ENCODE measurements at regions of chr1 and their contacts with region 1.

Region 1: DNA sequence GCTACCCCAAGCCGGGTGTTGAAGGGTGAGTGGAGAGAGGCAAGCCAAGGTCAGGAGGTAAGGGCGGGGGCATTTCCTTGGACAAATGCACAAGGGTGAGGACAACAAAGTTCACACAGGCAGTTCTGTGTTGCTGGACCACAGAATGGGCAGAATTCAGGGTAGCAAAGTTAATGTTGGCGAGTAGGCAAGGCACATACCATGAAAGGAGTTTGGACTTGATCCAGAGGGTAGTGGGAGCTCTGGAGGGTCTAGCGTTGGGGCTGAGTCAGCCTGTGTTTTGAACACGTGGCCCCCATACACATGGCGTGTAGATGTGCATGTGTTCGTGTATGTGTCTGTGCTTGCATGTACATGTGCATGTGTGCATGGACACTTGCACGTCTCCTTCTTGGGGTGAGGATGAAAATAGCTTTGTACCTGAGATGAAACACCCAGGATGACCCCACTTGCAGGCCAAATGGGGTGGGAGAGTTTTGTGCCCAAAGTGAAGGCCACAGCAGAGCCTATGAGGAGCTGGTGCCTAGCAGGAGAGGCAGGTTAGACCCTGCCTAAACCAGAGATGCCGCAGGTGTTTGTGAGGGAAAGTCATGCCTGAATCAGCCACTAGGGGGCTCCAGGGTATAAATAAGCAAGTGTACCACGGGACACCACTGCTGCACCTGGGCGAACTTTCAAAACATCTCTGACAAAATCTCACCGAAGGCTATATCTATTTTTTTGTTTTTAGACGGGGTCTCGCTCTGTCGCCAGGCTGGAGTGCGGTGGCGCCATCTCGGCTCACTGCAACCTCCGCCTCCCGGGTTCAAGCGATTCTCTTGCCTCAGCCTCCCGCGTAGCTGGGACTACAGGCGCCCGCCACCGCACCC is 21.8 kb downstream of the SLC27A3 start:
- DNase-seq: peak; percentile 90 to 93
- H3K4me3 ChIP-seq: no peak overlapping the region
- H3K27ac ChIP-seq: no peak overlapping the region
- H3K4me1 ChIP-seq: peaks cover 0 to 8% (median 4%) of the 10 kb centered on the region in 4 donors
- H3K27me3 ChIP-seq: peaks cover 0 to 14% (median 0%) of the 10 kb centered on the region in 3 donors
- CTCF ChIP-seq: peak in 5 of 7 experiments; percentile 79 to 94 (median 91)
- EP300 ChIP-seq: no peak
- POLR2A ChIP-seq: no peak

Region 2: GRCh38 chr1:153946622-153947241 is 149.7 kb after region 1 on chr1 and contains the start of gene DENND4B:
- intact Hi-C with region 1: loop called (anchors 10 kb)
- DNase-seq: peak; percentile 84 to 95
- H3K4me3 ChIP-seq: peak within 1 kb of the TSS; percentile 84 to 99 (median 94)
- H3K27ac ChIP-seq: peak within 1 kb of the TSS; percentile 91 to 100 (median 98)
- H3K4me1 ChIP-seq: peaks cover 9 to 38% (median 27%) of the 10 kb centered on the region in 4 donors
- H3K27me3 ChIP-seq: no peaks in the 10 kb centered on the region
- CTCF ChIP-seq: peak in 6 of 7 experiments; percentile 35 to 99 (median 95)
- EP300 ChIP-seq: no peak
- POLR2A ChIP-seq: no peak
- total RNA-seq, gene DENND4B: 20.9 to 73.0 (median 36.6) TPM

Region 3: GRCh38 chr1:153985941-153986761 is 189.1 kb after region 1 on chr1 and contains the start of gene RAB13:
- intact Hi-C with region 1: loop called (anchors 5 kb)
- DNase-seq: peak; percentile 89 to 95
- H3K4me3 ChIP-seq: peak within 1 kb of the TSS; percentile 47 to 71 (median 56)
- H3K27ac ChIP-seq: peak within 1 kb of the TSS; percentile 80 to 94 (median 89)
- H3K4me1 ChIP-seq: peaks cover 15 to 41% (median 33%) of the 10 kb centered on the region in 4 donors
- H3K27me3 ChIP-seq: no peaks in the 10 kb centered on the region
- CTCF ChIP-seq: no peak
- EP300 ChIP-seq: no peak
- POLR2A ChIP-seq: no peak
- total RNA-seq, gene RAB13: 35.5 to 82.9 (median 43.7) TPM

Measured in stomach (tissue), 19 donors.